ENCODE measurements at regions of chr10 and their contacts with region 1.

Region 1: DNA sequence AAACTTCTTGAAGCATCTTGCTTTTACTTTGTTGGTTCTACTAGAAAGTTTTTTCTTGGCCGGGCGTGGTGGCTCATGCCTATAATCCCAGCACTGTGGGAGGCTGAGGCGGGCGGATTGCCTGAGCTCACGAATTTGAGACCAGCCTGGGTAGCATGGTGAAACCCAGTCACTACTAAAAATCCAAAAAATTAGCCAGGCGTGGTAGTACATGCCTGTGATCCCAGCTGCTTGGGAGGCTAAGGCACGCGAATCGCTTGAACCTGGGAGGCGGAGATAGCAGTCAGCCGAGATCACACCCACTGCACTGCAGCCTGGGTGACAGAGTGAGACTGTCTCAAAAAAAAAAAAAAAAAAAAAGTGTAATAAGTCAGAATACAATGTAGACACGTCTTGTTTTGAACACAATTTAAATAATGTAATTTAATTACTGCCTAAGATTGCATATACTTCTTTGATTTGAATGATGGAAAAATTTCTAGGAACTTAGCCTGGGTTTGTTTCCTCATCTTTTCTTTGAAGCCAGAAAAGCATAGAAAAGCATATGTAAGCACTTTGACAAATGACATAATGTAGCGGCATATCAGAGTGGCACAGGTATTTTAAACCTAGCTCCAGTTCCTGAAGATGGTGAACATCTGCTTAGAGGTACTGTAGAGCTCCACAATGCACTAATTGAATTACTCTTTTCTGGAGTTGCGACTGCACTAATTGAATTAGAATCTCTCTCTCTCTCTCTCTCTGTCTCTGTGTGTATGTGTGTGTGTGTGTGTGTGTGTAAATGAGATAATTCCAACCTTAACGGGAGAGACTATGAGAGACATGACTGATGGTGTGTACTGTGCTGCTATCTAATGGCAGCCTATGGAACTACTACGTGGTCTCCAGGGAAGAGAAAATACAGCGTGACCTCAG is 87.8 kb downstream of the BTRC start:
- H3K4me3 ChIP-seq: no peak overlapping the region
- H3K27ac ChIP-seq: no peak overlapping the region
- H3K4me1 ChIP-seq: peaks cover 26% of the 10 kb centered on the region
- CTCF ChIP-seq: peak; percentile 94

Region 2: GRCh38 chr10:101291331-101292193 is 150.2 kb before region 1 on chr10:
- CTCF ChIA-PET with region 1: interaction called, 14 read pairs
- POLR2A ChIA-PET with region 1: no interaction called
- H3K4me3 ChIP-seq: peak overlapping the region; percentile 51
- H3K27ac ChIP-seq: peak overlapping the region; percentile 24; the same call in 1 of the 2 replicates
- H3K4me1 ChIP-seq: peaks cover 3% of the 10 kb centered on the region; the same call in 1 of the 2 replicates
- CTCF ChIP-seq: peak; percentile 90

Region 3: GRCh38 chr10:101297901-101298486 is 143.8 kb before region 1 on chr10:
- CTCF ChIA-PET with region 1: interaction called, 102 read pairs
- POLR2A ChIA-PET with region 1: no interaction called
- H3K4me3 ChIP-seq: no peak overlapping the region
- H3K27ac ChIP-seq: no peak overlapping the region
- H3K4me1 ChIP-seq: no peaks in the 10 kb centered on the region
- CTCF ChIP-seq: peak; percentile 89

Region 4: GRCh38 chr10:101305320-101306241 is 136.2 kb before region 1 on chr10:
- CTCF ChIA-PET with region 1: interaction called, 102 read pairs
- POLR2A ChIA-PET with region 1: no interaction called
- H3K4me3 ChIP-seq: no peak overlapping the region
- H3K27ac ChIP-seq: no peak overlapping the region
- H3K4me1 ChIP-seq: no peaks in the 10 kb centered on the region
- CTCF ChIP-seq: no peak

Region 5: GRCh38 chr10:101453791-101454718 is 12.3 kb after region 1 on chr10:
- CTCF ChIA-PET with region 1: interaction called, 37 read pairs
- POLR2A ChIA-PET with region 1: no interaction called
- H3K4me3 ChIP-seq: no peak overlapping the region
- H3K27ac ChIP-seq: peak overlapping the region; percentile 67
- H3K4me1 ChIP-seq: peaks cover 55% of the 10 kb centered on the region
- CTCF ChIP-seq: no peak

Region 6: GRCh38 chr10:101569838-101570766 is 128.3 kb after region 1 on chr10:
- CTCF ChIA-PET with region 1: interaction called, 10 read pairs
- POLR2A ChIA-PET with region 1: no interaction called
- H3K4me3 ChIP-seq: peak overlapping the region; percentile 65
- H3K27ac ChIP-seq: no peak overlapping the region; the same call in 1 of the 2 replicates
- H3K4me1 ChIP-seq: peaks cover 3% of the 10 kb centered on the region
- CTCF ChIP-seq: peak; percentile 93